ENCODE measurements at regions of chr4 and their contacts with region 1.

Region 1: DNA sequence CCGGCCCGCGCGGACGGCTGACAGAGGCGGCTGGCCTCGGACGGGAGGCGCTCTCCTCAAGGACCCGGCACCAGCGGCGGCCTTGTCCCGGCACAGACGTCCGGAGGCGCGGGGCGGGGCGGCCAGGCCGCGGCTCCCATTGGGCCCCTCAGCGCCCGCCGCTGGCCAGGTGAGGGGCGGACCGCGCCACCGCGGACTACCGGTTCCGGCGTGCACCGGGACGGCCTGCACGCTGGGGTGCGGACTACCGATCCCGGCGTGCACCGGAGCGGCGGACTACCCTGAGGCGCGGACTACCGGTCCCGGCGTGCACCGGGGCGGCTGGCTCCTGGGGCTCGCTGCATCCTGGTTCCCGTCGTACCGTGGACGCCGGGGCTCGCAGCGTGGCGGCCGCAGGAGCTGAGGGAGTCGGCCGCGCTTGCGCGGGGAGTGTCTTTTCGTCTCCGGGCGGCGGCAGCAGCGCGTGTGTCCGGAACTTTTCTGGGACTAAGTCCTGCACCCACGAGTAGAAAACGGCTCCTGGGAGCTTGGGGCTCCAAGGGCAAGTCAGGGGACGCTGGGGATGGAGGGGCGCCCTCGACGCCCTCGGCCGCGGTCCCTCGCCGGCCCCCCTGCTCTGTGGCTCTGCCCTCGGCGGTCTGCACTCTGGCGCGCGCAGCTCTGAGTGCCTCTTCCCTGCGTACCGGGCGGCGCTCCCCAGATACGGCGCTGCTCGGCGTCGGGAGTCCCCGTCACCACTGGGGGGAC is at the start of gene LETM1:
- DNase-seq: peak; percentile 97
- ATAC-seq: peak; percentile 99
- H3K4me3 Mint-ChIP-seq: peak within 1 kb of the TSS; percentile 78
- H3K27ac Mint-ChIP-seq: peak within 1 kb of the TSS; percentile 55
- H3K4me1 Mint-ChIP-seq: peaks cover 40% of the 10 kb centered on the region
- H3K27me3 Mint-ChIP-seq: no peaks in the 10 kb centered on the region
- total RNA-seq, gene LETM1: 41.6 to 51.3 TPM

Region 2: DNA sequence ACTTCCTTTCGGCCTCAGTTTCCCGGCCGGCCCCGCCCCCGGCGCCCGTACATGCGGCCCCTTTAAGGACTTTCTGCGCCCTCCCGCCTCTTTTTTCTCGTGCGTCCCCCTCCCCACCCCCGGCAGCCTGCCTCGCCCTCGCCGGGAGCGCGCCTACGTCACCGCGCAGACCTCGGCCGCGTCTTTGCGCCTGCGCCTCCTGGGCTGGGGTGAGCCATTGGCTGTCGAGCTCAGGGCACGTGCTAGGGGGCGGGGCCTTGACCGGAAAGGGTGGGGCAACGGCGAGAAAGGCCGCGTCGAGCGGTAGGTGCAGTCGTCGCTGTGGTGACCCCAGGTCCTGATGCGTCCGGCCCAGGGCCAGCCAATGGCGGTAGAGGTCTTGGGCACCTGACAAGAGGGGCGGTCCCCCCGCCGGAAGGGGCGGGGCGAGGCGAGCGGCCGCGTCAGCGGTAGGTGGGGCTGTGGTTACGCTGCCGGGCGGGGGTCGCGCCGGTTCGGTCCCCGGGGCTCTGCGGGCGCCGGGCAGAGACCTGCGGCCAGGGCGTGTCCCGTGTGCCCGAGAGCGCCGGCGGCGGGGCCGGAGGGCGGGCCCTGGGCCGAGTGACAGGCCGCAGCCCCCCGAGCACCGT is 509.3 kb before region 1 on chr4 and contains the start of gene UVSSA:
- CTCF ChIA-PET with region 1: no interaction called
- POLR2A ChIA-PET with region 1: no interaction called
- intact Hi-C with region 1: loop called in 1 of 2 experiments (anchors 1 kb)
- DNase-seq: peak; percentile 100
- ATAC-seq: peak; percentile 95
- H3K4me3 Mint-ChIP-seq: peak within 1 kb of the TSS; percentile 86
- H3K27ac Mint-ChIP-seq: peak within 1 kb of the TSS; percentile 87
- H3K4me1 Mint-ChIP-seq: peaks cover 47% of the 10 kb centered on the region
- H3K27me3 Mint-ChIP-seq: no peaks in the 10 kb centered on the region
- total RNA-seq, gene UVSSA: 14.8 to 18.1 TPM

Region 3: DNA sequence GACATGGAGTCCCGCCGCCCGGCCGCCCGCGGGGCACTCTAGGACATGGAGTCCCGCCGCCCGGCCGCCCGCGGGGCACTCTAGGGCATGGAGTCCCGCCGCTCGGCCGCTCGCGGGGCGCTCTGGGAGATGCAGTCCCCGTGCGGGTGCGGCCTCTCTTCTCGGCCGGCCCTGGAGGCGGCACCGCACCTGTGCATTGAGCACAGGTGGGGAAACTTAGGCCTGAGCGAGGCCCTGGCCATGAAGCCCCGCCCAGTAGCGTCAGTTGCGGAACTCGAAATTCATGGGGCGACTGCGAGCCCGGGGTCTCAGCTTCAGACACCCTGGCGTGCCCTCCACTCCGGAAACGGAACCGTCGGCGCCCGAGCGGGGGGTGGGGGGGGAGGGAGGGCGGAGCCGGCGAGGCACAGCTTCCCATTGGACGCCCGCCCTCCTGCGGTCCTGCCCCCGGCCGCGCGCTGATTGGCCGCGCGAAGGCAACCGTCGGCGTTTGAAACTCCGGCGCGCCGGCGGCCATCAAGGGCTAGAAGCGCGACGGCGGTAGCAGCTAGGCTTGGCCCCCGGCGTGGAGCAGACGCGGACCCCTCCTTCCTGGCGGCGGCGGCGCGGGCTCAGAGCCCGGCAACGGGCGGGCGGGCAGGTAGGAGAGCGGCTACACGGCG is 135.1 kb before region 1 on chr4 and contains the starts of genes TACC3 and TMEM129:
- CTCF ChIA-PET with region 1: interaction called, 3 read pairs
- POLR2A ChIA-PET with region 1: no interaction called
- intact Hi-C with region 1: loop called in 1 of 2 experiments (anchors 1 kb)
- DNase-seq: peak; percentile 96
- ATAC-seq: peak; percentile 81
- H3K4me3 Mint-ChIP-seq: peak within 1 kb of the TSS; percentile 96
- H3K27ac Mint-ChIP-seq: peak within 1 kb of the TSS; percentile 99
- H3K4me1 Mint-ChIP-seq: peaks cover 52% of the 10 kb centered on the region
- H3K27me3 Mint-ChIP-seq: no peaks in the 10 kb centered on the region
- total RNA-seq, gene TACC3: 197 to 206 TPM
- total RNA-seq, gene TMEM129: 13.7 to 14.6 TPM

Region 4: DNA sequence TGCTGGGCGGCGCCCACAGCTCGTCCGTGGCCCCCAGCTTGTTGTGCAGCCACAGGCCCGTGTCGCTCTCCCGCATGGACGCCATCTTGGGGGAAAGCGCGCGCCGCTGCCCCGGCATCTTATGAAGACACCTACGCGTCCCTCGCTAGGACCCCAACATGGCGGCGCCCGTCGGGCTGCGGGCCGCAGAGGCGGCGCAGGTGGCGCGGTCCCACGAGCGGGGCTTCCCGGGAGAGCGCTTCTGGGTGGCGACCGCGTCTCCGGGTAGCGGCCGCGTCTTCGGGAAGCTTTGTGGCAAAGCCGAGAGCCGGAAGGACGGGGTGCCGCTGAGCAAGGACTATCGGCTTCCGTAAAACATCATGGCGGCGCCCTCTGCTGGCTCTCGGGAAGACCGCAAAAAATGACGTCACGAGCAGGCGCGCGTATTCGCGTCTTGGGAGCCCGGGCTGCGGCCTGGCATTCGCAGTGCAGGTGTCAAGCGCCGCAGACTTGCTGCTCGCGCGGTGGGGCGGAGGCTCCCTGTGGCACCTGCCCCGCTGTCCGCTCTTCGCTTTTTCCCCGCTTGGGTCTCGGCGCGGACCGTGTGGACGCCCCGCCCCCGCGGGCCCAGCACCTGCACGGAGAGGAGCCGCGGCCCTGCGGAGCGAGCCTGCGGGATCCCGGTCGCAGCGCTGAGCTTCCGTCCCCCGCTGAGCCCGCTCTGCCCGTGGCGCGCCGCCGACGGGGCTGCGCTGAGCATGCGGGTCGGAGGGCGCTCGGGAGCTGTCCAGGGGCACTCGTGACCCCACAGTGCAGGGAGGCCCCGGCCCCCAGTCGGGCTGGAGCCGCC is 152.9 kb after region 1 on chr4 and contains the start of gene NELFA:
- CTCF ChIA-PET with region 1: no interaction called
- POLR2A ChIA-PET with region 1: no interaction called
- intact Hi-C with region 1: loop called (anchors 1 to 2 kb)
- DNase-seq: peak; percentile 97
- ATAC-seq: peak; percentile 81
- H3K4me3 Mint-ChIP-seq: peak within 1 kb of the TSS; percentile 87
- H3K27ac Mint-ChIP-seq: peak within 1 kb of the TSS; percentile 90
- H3K4me1 Mint-ChIP-seq: peaks cover 34% of the 10 kb centered on the region
- H3K27me3 Mint-ChIP-seq: no peaks in the 10 kb centered on the region
- total RNA-seq, gene NELFA: 41.6 to 48.3 TPM

Region 5: DNA sequence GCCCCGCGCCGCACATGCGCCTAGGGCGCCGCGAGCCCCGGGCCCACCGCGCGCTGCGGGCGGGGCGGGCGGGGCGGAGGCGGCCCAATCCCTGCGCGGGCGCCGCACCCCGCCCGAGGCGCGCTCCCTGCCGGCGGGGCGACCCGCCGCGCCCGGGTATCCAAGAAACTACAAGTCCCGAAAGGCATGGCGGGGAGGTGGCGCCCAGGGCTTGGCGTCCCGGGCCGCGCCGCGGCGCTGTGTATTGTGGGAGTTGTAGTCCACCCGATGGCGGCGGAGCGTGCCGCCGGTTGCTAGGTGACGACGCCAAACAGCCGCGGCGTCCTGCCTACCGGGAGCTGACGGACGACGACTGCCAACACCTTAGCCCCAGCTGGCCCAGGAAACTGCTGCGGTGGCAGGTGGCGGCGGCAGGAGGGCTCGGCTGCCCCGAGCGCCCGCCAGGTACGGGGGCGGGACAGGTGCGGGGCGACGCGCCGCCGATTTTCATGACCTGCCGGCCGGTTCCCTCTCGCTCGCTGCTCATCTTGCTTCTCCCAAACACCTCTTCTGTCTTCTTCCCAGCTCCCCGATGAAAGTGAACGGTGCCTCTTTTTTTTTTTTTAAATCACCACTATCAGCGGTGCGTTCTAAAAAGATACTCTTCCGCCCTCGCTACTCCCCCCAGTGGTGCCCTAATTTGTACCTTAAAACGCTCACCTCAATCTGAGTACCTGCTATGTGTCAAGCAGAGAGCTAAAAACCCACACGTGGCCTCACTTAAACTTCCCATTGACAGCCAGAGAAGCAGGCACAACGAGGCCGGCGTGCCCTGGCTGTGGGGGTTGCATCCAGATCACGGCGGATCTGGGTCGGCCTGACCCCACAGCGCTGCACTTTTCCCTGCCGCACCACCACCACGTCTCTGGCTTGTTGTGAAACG is 562.7 kb after region 1 on chr4 and contains the start of gene CFAP99:
- CTCF ChIA-PET with region 1: no interaction called
- POLR2A ChIA-PET with region 1: no interaction called
- intact Hi-C with region 1: loop called in 1 of 2 experiments (anchors 1 kb)
- DNase-seq: peak; percentile 99
- ATAC-seq: peak; percentile 93
- H3K4me3 Mint-ChIP-seq: peak within 1 kb of the TSS; percentile 82
- H3K27ac Mint-ChIP-seq: peak within 1 kb of the TSS; percentile 68
- H3K4me1 Mint-ChIP-seq: peaks cover 39% of the 10 kb centered on the region
- H3K27me3 Mint-ChIP-seq: peaks cover 27% of the 10 kb centered on the region
- total RNA-seq, gene CFAP99: 0.05 TPM in 1 of 2 experiments, not detected in the other